A549 (cell line): ENCODE measurements at regions of chr5 and their contacts with region 1.

Region 1: DNA sequence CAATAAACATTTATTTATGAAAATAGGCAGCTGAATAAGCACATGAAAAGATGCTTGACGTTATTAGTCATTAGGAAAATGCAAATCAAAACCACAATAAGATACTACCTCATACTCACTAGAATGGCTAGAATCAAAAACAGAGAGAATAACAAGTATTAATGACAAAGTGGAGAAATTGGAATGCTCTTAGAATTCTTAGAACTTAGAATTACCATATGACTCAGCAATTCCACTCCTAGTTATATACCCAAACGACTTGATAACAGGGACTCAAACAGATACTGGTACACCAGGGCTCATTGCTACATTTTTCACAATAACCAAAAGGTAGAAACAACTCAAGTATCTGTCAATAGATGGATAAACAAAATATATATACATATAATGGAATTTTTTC is 15.1 kb upstream of the TRIM36 start:
- DNase-seq: no peak
- ATAC-seq: no peak
- H3K4me3 ChIP-seq: no peak overlapping the region
- H3K27ac ChIP-seq: no peak overlapping the region
- H3K4me1 ChIP-seq: no peaks in the 10 kb centered on the region
- CTCF ChIP-seq: no peak
- EP300 ChIP-seq: no peak
- POLR2A ChIP-seq: no peak
- RAD21 ChIP-seq: no peak

Region 2: GRCh38 chr5:115169487-115170133 is 15.2 kb before region 1 on chr5 and contains the start of gene TRIM36:
- CTCF ChIA-PET with region 1: interaction called, 3 read pairs
- POLR2A ChIA-PET with region 1: interaction called, 10 read pairs
- DNase-seq: peak; percentile 64 to 94
- ATAC-seq: peak; percentile 87 to 95
- H3K4me3 ChIP-seq: peak within 1 kb of the TSS; percentile 88
- H3K27ac ChIP-seq: peak within 1 kb of the TSS; percentile 61 to 85
- H3K4me1 ChIP-seq: peaks cover 8% of the 10 kb centered on the region; the same call in 1 of the 3 replicates
- CTCF ChIP-seq: no peak
- EP300 ChIP-seq: no peak
- POLR2A ChIP-seq: peak; percentile 48; the same call in 1 of the 2 replicates
- RAD21 ChIP-seq: no peak
- polyA plus RNA-seq, gene TRIM36: 1.2 and 1.4 TPM in 2 replicates